ENCODE measurements at regions of chr10 and their contacts with region 1.

Region 1: GRCh38 chr10:45353186-45353585 is 20.8 kb upstream of the ALOX5 start:
- DNase-seq: no peak
- H3K4me3 Mint-ChIP-seq: no peak overlapping the region
- H3K27ac Mint-ChIP-seq: peak overlapping the region; percentile 56
- H3K4me1 Mint-ChIP-seq: peaks cover 42% of the 10 kb centered on the region
- H3K27me3 Mint-ChIP-seq: peaks cover 8% of the 10 kb centered on the region

Region 2: DNA sequence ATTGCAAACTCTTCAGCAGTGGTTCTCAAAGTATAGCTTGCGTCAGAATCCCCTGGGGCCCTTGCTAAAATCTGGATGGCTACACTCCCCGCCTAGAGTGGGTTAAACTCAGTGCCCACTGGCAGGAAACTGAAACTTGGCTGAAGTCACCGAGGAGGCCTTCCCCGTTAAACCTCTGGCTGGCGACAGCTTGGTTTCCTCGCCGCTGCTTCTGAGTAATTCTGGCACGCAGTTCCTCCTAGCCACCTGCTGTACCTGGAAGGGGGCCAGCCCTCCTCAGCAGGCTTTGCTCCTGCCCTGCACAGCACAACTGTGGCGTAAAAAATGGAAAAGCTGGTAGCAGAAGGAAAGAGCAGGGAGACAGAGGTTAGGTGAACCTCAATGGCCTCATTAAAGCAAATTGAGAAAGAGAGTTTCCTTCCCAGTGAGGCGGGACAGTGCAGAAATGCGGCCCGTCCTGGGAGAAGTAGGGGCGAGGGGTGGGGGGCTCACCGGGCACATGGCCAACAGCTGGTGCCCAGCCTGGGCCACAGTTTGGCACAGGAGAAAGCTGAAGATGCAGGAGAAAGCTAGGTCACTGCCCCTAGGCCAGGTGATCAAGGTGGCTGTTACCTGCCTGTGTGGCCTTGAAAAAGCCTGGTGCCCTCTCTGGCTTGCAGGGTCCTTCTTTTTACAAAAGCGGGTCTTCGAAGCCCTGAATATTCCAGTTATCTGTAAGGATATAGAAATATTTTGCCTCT is 67.4 kb after region 1 on chr10:
- intact Hi-C with region 1: loop called (anchors 1 kb)
- DNase-seq: peak; percentile 65
- H3K4me3 Mint-ChIP-seq: peak overlapping the region; percentile 96
- H3K27ac Mint-ChIP-seq: peak overlapping the region; percentile 98
- H3K4me1 Mint-ChIP-seq: peaks cover 91% of the 10 kb centered on the region
- H3K27me3 Mint-ChIP-seq: no peaks in the 10 kb centered on the region

Region 3: DNA sequence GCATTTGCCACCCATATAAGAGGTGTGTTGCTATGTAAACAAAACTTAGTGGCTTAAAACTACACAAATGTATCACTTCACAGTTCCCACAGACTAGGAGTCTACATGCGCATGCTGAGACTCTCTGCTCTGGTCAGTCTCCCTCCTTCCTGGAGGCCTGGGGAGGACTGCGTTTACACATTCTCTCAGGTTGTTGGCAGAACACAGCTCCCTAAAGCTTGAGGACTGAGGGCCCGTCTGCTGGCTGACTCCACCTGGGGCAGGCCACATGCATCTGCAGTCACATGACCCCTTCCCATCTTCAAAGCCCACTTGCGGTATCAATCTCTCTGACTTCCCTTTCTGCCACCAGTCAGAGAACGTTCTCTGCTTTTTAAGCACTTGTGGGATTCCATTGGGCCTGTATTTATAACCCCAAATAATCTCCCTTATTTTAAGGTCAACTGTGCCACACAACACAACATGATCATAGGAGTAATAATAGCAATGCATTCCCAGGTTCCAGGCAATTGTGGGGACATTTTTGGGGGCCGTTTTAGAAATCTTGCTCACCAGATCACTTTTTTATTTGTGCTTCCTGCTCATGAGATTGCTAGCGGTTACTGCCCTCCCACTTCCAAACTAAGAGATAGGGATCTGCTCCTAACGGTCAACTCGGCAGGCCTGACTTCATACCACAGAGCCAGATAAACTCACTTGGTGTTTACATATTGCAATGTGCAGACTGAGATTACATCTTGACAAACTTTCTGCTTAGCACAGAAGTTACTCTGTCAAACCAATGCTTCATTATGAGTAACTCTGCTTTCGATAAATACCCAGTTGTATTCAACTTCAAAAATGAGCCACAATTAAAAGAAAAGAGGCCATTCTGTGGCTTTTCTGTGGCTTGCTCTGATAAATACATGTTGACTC is 117.2 kb after region 1 on chr10:
- intact Hi-C with region 1: loop called (anchors 1 kb)
- DNase-seq: peak; percentile 17
- H3K4me3 Mint-ChIP-seq: peak overlapping the region; percentile 27
- H3K27ac Mint-ChIP-seq: peak overlapping the region; percentile 69
- H3K4me1 Mint-ChIP-seq: peaks cover 21% of the 10 kb centered on the region
- H3K27me3 Mint-ChIP-seq: no peaks in the 10 kb centered on the region